Posterior vena cava (tissue), 2 donors: ENCODE measurements at regions of chr16 and their contacts with region 1.

Region 1: GRCh38 chr16:66324815-66325515 is 41.5 kb upstream of the CDH5 start:
- DNase-seq: no peak

Region 2: GRCh38 chr16:66223176-66223780 is 101.7 kb before region 1 on chr16:
- intact Hi-C with region 1: no loop called
- DNase-seq: peak; percentile 72

Region 3: GRCh38 chr16:66376559-66377305 is 51.8 kb after region 1 on chr16:
- intact Hi-C with region 1: loop called in 1 of 2 experiments (anchors 2 kb)
- DNase-seq: no peak